ENCODE measurements at regions of chr17 and their contacts with region 1.

Region 1: GRCh38 chr17:979538-980405 is at the start of gene NXN:
- DNase-seq: peak; percentile 65
- ATAC-seq: peak; percentile 86
- H3K4me3 ChIP-seq: peak within 1 kb of the TSS; percentile 100
- H3K27ac ChIP-seq: peak within 1 kb of the TSS; percentile 91
- H3K4me1 ChIP-seq: peaks cover 12% of the 10 kb centered on the region
- H3K27me3 ChIP-seq: no peaks in the 10 kb centered on the region
- CTCF ChIP-seq: peak; percentile 37
- POLR2A ChIP-seq: no peak
- RAD21 ChIP-seq: peak; percentile 46
- total RNA-seq, gene NXN: 52.5 and 52.8 TPM in 2 replicates

Region 2: GRCh38 chr17:409848-410545 is 569.8 kb before region 1 on chr17:
- CTCF ChIA-PET with region 1: no interaction called
- POLR2A ChIA-PET with region 1: no interaction called
- dilution Hi-C with region 1: no loop called
- in situ Hi-C with region 1: no loop called
- intact Hi-C with region 1: loop called (anchors 2 kb)
- DNase-seq: peak; percentile 98
- ATAC-seq: peak; percentile 91
- H3K4me3 ChIP-seq: peak overlapping the region; percentile 44
- H3K27ac ChIP-seq: peak overlapping the region; percentile 48
- H3K4me1 ChIP-seq: peaks cover 4% of the 10 kb centered on the region
- H3K27me3 ChIP-seq: no peaks in the 10 kb centered on the region
- CTCF ChIP-seq: peak; percentile 9; the same call in 1 of the 2 replicates
- POLR2A ChIP-seq: peak; percentile 60
- RAD21 ChIP-seq: no peak

Region 3: DNA sequence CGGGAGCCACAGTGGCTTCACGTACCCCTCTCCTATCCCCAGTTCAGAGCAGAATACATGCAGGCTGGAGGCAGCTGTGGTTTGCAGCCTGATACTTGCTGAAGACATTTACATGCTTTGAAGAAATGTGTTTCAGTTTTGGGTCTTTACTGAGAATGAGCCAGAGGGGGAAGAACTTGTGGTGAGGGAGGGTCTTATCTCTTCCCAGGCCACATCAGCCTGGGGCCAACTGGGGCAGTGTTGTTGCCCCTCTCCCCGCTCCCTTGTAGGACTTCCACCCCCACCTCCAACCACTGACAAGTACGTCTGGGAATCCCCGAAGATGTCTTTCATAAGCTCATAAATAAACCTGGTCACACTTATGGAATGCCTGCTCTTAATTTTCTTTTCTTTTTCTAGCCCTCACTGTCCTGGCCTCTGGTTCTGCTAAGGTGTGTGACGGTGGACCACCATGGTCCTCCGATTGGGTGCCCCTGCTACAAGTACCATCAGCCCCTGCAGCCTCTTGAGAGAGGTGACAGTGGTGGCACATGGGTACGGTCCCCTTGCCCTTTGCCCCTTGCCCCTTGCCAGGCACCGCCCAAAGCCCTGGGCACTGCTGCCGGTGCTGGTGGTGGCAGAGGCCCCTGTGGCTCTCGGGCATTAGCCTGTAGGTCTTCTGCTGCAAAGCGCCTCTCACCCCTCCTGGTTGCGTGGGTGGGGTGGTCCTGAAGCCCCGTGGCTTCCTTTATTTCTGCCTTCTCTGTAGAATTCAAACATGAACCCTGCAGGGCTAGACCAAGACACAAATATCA is 482.3 kb before region 1 on chr17:
- CTCF ChIA-PET with region 1: no interaction called
- POLR2A ChIA-PET with region 1: no interaction called
- dilution Hi-C with region 1: no loop called
- in situ Hi-C with region 1: no loop called
- intact Hi-C with region 1: no loop called
- DNase-seq: peak; percentile 59
- ATAC-seq: peak; percentile 81
- H3K4me3 ChIP-seq: no peak overlapping the region
- H3K27ac ChIP-seq: no peak overlapping the region
- H3K4me1 ChIP-seq: peaks cover 9% of the 10 kb centered on the region
- H3K27me3 ChIP-seq: no peaks in the 10 kb centered on the region; the same call in 1 of the 2 replicates
- CTCF ChIP-seq: no peak
- POLR2A ChIP-seq: no peak
- RAD21 ChIP-seq: no peak

Region 4: GRCh38 chr17:732067-732901 is 247.5 kb before region 1 on chr17 and contains the start of gene TLCD3A:
- CTCF ChIA-PET with region 1: interaction called, 3 read pairs
- POLR2A ChIA-PET with region 1: no interaction called
- dilution Hi-C with region 1: no loop called
- in situ Hi-C with region 1: no loop called
- intact Hi-C with region 1: loop called (anchors 5 kb)
- DNase-seq: peak; percentile 55
- ATAC-seq: peak; percentile 77
- H3K4me3 ChIP-seq: peak within 1 kb of the TSS; percentile 55
- H3K27ac ChIP-seq: peak within 1 kb of the TSS; percentile 68
- H3K4me1 ChIP-seq: peaks cover 10% of the 10 kb centered on the region
- H3K27me3 ChIP-seq: no peaks in the 10 kb centered on the region
- CTCF ChIP-seq: no peak
- POLR2A ChIP-seq: peak; percentile 55
- RAD21 ChIP-seq: no peak
- total RNA-seq, gene TLCD3A: 14.4 and 15.2 TPM in 2 replicates

Region 5: GRCh38 chr17:789160-789840 is 190.5 kb before region 1 on chr17:
- CTCF ChIA-PET with region 1: interaction called, 14 read pairs
- POLR2A ChIA-PET with region 1: interaction called, 22 read pairs
- dilution Hi-C with region 1: loop called (anchors 25 kb)
- in situ Hi-C with region 1: loop called (anchors 5 kb)
- intact Hi-C with region 1: loop called (anchors 1 kb)
- DNase-seq: peak; percentile 65
- ATAC-seq: no peak
- H3K4me3 ChIP-seq: no peak overlapping the region
- H3K27ac ChIP-seq: no peak overlapping the region
- H3K4me1 ChIP-seq: peaks cover 8% of the 10 kb centered on the region; the same call in 1 of the 2 replicates
- H3K27me3 ChIP-seq: no peaks in the 10 kb centered on the region
- CTCF ChIP-seq: no peak
- POLR2A ChIP-seq: no peak
- RAD21 ChIP-seq: no peak

Region 6: GRCh38 chr17:933312-934083 is 46.3 kb before region 1 on chr17:
- CTCF ChIA-PET with region 1: interaction called, 5 read pairs
- POLR2A ChIA-PET with region 1: interaction called, 8 read pairs
- dilution Hi-C with region 1: no loop called
- in situ Hi-C with region 1: no loop called
- intact Hi-C with region 1: loop called (anchors 2 kb)
- DNase-seq: peak; percentile 99
- ATAC-seq: peak; percentile 86
- H3K4me3 ChIP-seq: no peak overlapping the region
- H3K27ac ChIP-seq: peak overlapping the region; percentile 86
- H3K4me1 ChIP-seq: peaks cover 19% of the 10 kb centered on the region
- H3K27me3 ChIP-seq: 0 out of 2 replicates have a peak, but pooled peaks cover 4% of the 10 kb centered on the region
- CTCF ChIP-seq: no peak
- POLR2A ChIP-seq: no peak
- RAD21 ChIP-seq: no peak

Region 7: GRCh38 chr17:1067282-1067956 is 87.6 kb after region 1 on chr17:
- CTCF ChIA-PET with region 1: no interaction called
- POLR2A ChIA-PET with region 1: no interaction called
- dilution Hi-C with region 1: no loop called
- in situ Hi-C with region 1: no loop called
- intact Hi-C with region 1: no loop called
- DNase-seq: no peak
- ATAC-seq: no peak
- H3K4me3 ChIP-seq: no peak overlapping the region
- H3K27ac ChIP-seq: no peak overlapping the region
- H3K4me1 ChIP-seq: no peaks in the 10 kb centered on the region
- H3K27me3 ChIP-seq: no peaks in the 10 kb centered on the region
- CTCF ChIP-seq: no peak
- POLR2A ChIP-seq: no peak
- RAD21 ChIP-seq: no peak